Ascending aorta (tissue), 2 donors: ENCODE measurements at regions of chr17 and their contacts with region 1.

Region 1: DNA sequence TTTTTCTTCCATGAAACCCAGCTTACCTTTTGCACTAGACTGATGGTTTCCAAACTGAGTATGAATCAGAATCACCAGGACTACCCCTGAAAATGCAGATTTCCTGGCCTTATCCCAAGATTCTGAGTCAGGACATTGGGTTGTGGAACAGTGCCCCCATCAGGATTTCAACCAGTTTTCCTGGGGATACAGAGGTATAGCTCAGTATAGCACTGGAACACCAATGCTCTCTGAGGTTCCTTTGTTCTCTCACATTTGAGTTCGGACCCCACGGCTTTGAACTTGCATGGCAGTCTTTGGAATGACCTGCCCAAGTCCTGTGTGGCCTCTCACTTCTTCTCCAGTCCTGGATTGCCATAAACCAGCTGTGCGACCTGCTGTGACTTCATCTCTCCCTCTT is 12.8 kb upstream of the CCL8 start:
- DNase-seq: peak in 1 of 2 donors; percentile 69
- H3K4me3 ChIP-seq: no peak overlapping the region
- H3K27ac ChIP-seq: no peak overlapping the region
- H3K4me1 ChIP-seq: peaks cover 0 to 5% of the 10 kb centered on the region in 2 donors
- H3K27me3 ChIP-seq: no peaks in the 10 kb centered on the region
- CTCF ChIP-seq: peak; percentile 48 to 60 (median 51)

Region 2: GRCh38 chr17:34248511-34249024 is 57.9 kb before region 1 on chr17:
- intact Hi-C with region 1: loop called (anchors 5 kb)
- DNase-seq: no peak
- H3K4me3 ChIP-seq: no peak overlapping the region
- H3K27ac ChIP-seq: peak overlapping the region; percentile 76 to 87
- H3K4me1 ChIP-seq: peaks cover 46 to 61% of the 10 kb centered on the region in 2 donors
- H3K27me3 ChIP-seq: no peaks in the 10 kb centered on the region
- CTCF ChIP-seq: no peak

Region 3: DNA sequence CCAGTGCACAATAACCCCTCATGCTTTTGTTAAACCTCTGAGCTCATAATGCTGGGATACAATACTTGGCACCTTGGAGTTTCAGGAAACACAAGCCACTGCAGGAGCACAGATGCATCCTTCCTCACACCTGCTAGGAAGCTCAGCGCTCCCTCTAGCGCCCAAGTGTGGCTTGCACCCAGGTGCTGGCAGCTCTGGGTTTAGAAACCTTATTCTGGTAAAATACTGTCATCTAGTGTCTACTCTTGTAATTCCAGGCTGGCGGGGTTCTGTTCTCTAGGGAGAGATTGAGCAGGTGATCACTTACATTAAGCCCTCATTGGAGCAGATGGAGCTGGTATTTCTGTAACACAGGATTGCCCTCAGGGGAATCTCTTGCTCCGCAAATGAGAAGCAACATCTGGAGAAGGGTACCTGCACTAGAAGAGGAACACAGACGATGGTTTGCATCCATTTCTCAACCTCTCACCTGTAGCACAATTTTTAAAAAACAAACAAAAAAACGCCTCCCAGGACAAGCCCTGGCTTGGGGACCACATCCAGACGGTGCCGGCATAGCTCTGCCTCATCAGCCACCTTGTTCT is 55.1 kb after region 1 on chr17:
- intact Hi-C with region 1: loop called (anchors 2 kb)
- DNase-seq: peak; percentile 45 to 92
- H3K4me3 ChIP-seq: no peak overlapping the region
- H3K27ac ChIP-seq: no peak overlapping the region
- H3K4me1 ChIP-seq: no peaks in the 10 kb centered on the region
- H3K27me3 ChIP-seq: no peaks in the 10 kb centered on the region
- CTCF ChIP-seq: peak; percentile 98

Region 4: GRCh38 chr17:34542700-34543336 is 236.4 kb after region 1 on chr17:
- intact Hi-C with region 1: no loop called
- DNase-seq: no peak
- H3K4me3 ChIP-seq: no peak overlapping the region
- H3K27ac ChIP-seq: no peak overlapping the region
- H3K4me1 ChIP-seq: no peaks in the 10 kb centered on the region
- H3K27me3 ChIP-seq: no peaks in the 10 kb centered on the region
- CTCF ChIP-seq: peak; percentile 47 to 62 (median 48)